CD4-positive, alpha-beta memory T cell (primary cell): ENCODE measurements at regions of chr2 and their contacts with region 1.

Region 1: GRCh38 chr2:227479865-227480475 is 8.0 kb downstream of the AGFG1 start:
- DNase-seq: peak in 1 of 5 donors; percentile 16
- H3K4me3 ChIP-seq: no peak overlapping the region
- H3K4me3 Mint-ChIP-seq: peak overlapping the region in 6 of 8 donors; percentile 14 to 67 (median 43)
- H3K27ac ChIP-seq: no peak overlapping the region
- H3K27ac Mint-ChIP-seq: peak overlapping the region in 6 of 7 donors; percentile 1 to 75 (median 17)
- H3K4me1 ChIP-seq: peaks cover 80% of the 10 kb centered on the region
- H3K4me1 Mint-ChIP-seq: peaks cover 52 to 87% (median 63%) of the 10 kb centered on the region in 4 donors
- H3K27me3 ChIP-seq: no peaks in the 10 kb centered on the region
- H3K27me3 Mint-ChIP-seq: no peaks in the 10 kb centered on the region

Region 2: GRCh38 chr2:227884511-227884947 is 404.6 kb after region 1 on chr2:
- CTCF ChIA-PET with region 1: interaction called, 4 read pairs
- POLR2A ChIA-PET with region 1: no interaction called
- intact Hi-C with region 1: loop called (anchors 10 kb)
- DNase-seq: peak; percentile 36 to 49 (median 46)
- H3K4me3 ChIP-seq: no peak overlapping the region
- H3K4me3 Mint-ChIP-seq: peak overlapping the region in 1 of 8 donors; percentile 12
- H3K27ac ChIP-seq: no peak overlapping the region
- H3K27ac Mint-ChIP-seq: no peak overlapping the region
- H3K4me1 ChIP-seq: no peaks in the 10 kb centered on the region
- H3K4me1 Mint-ChIP-seq: peaks cover 0 to 10% (median 1%) of the 10 kb centered on the region in 4 donors
- H3K27me3 ChIP-seq: no peaks in the 10 kb centered on the region
- H3K27me3 Mint-ChIP-seq: peaks cover 0 to 3% of the 10 kb centered on the region in 2 donors